PC-9 (cell line): ENCODE measurements at regions of chr12 and their contacts with region 1.

Region 1: DNA sequence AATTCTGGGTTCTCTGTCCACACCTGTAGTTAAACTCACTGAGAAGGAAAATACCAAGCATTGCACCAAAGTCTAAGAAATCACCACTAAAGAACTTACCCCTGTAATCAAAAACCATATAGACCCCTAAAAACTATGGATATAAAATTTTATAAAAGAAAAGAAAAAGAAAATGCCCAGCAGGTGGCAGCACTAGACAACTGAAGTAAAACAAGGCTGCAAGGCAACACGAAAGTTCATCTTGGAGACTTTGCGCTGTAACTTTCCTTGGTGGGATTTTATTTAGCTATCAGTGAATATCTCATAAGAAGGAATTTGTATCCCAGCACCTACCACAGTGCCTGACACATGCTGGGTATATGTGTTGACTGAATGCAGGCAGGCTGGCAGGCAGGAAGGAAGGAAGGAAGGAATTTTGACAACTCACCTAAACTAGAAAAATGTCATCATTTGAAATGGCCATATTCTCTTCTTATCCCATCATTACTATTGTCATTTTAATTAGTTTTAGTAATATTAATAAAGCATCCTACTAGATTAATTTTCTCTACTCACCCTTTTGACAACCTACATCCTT is 68.2 kb upstream of the ETV6 start:
- DNase-seq: peak; percentile 56 to 82
- H3K4me3 ChIP-seq: no peak overlapping the region
- H3K27ac ChIP-seq: peak overlapping the region; percentile 94
- H3K4me1 ChIP-seq: peaks cover 49% of the 10 kb centered on the region
- H3K27me3 ChIP-seq: no peaks in the 10 kb centered on the region
- CTCF ChIP-seq: peak; percentile 84

Region 2: GRCh38 chr12:11621797-11622423 is 40.6 kb after region 1 on chr12:
- CTCF ChIA-PET with region 1: interaction called, 6 read pairs
- POLR2A ChIA-PET with region 1: no interaction called
- intact Hi-C with region 1: loop called (anchors 2 kb)
- DNase-seq: no peak
- H3K4me3 ChIP-seq: no peak overlapping the region
- H3K27ac ChIP-seq: peak overlapping the region; percentile 85; the same call in 1 of the 2 replicates
- H3K4me1 ChIP-seq: peaks cover 23% of the 10 kb centered on the region
- H3K27me3 ChIP-seq: no peaks in the 10 kb centered on the region
- CTCF ChIP-seq: no peak

Region 3: DNA sequence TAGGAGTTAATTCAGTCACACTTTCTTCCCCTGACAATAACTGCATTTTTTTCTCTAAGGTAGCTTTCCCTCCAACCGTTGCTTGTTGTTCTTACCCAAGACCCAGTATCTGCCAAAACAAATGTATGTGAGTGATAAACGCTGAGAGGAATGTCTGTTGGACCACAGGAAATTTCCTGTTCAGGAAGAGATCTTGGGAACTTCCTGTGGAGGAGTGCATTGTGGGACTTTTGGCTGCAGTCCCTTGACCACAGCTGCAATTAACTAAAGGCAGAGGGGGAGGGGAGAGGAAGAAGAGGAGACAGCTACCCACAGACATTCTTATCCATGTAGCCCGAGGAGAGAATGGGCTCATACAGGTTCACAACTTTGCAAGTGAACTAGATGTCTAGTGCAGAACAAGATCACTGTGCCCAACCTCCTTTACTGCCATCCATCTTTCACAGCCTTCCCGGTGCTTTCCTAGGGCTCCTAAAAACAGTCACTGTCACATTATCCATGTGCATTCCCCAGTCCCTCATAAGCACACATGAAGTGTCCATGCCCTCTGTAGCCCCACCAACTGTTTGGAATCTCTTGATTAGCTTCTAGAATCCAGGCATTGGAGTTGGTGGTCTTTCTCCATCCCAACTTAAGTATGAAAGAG is 217.7 kb after region 1 on chr12:
- CTCF ChIA-PET with region 1: interaction called, 4 read pairs
- POLR2A ChIA-PET with region 1: interaction called, 4 read pairs
- intact Hi-C with region 1: loop called (anchors 1 kb)
- DNase-seq: peak in 1 of 2 experiments; percentile 78
- H3K4me3 ChIP-seq: no peak overlapping the region
- H3K27ac ChIP-seq: no peak overlapping the region; the same call in 1 of the 2 replicates
- H3K4me1 ChIP-seq: peaks cover 46% of the 10 kb centered on the region
- H3K27me3 ChIP-seq: no peaks in the 10 kb centered on the region
- CTCF ChIP-seq: no peak

Region 4: DNA sequence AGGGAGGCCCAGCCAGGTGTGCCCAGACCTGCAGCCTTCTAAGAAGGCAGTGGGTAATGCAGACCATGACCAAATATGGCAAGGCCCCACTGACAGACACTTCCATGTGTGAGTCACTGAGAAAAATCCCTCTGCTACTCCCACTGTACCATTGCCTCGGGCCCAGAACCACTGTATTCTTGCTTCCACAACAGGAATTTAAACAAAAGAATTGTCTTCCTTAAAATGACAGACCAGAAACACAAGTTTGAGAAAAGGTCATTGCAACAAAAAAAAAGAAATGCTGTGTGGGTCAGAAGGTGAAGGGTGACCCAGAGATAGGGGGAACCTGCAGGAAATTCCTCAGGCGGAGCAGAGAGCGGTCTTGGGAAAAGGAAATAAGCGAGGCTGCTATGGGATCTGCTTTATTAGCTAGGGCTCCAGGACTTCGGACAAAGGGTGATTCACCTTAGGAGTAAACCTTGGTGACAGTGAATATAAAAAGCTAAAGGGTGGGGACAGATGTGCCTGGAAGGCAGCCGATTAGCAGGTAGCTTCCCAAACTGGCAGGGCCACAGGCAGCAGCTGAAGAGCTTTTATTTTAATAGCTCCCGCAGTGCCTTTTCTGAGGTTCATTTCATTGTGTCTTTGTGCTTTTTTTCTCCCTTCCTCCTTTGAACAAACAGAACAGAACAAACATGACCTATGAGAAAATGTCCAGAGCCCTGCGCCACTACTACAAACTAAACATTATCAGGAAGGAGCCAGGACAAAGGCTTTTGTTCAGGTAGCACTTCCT is 304.2 kb after region 1 on chr12:
- CTCF ChIA-PET with region 1: interaction called, 3 read pairs
- POLR2A ChIA-PET with region 1: no interaction called
- intact Hi-C with region 1: loop called (anchors 1 kb)
- DNase-seq: peak; percentile 89 to 99
- H3K4me3 ChIP-seq: peak overlapping the region; percentile 35; the same call in 1 of the 2 replicates
- H3K27ac ChIP-seq: peak overlapping the region; percentile 99
- H3K4me1 ChIP-seq: peaks cover 39% of the 10 kb centered on the region
- H3K27me3 ChIP-seq: no peaks in the 10 kb centered on the region
- CTCF ChIP-seq: no peak

Region 5: GRCh38 chr12:12684375-12685106 is 1103.3 kb after region 1 on chr12:
- CTCF ChIA-PET with region 1: no interaction called
- POLR2A ChIA-PET with region 1: interaction called, 10 read pairs
- intact Hi-C with region 1: no loop called
- DNase-seq: peak in 1 of 2 experiments; percentile 25
- H3K4me3 ChIP-seq: no peak overlapping the region
- H3K27ac ChIP-seq: no peak overlapping the region
- H3K4me1 ChIP-seq: no peaks in the 10 kb centered on the region
- H3K27me3 ChIP-seq: no peaks in the 10 kb centered on the region
- CTCF ChIP-seq: no peak